ENCODE measurements at regions of chr1 and their contacts with region 1.

Region 1: GRCh38 chr1:153775458-153776327 is 486 bp downstream of the SLC27A3 start:
- DNase-seq: peak; percentile 73 to 79
- H3K4me3 ChIP-seq: peak overlapping the region; percentile 62 to 94 (median 87)
- H3K27ac ChIP-seq: peak overlapping the region; percentile 85 to 94
- H3K4me1 ChIP-seq: peaks cover 21 to 31% of the 10 kb centered on the region in 2 donors
- H3K27me3 ChIP-seq: no peaks in the 10 kb centered on the region
- CTCF ChIP-seq: no peak
- POLR2A ChIP-seq: no peak

Region 2: DNA sequence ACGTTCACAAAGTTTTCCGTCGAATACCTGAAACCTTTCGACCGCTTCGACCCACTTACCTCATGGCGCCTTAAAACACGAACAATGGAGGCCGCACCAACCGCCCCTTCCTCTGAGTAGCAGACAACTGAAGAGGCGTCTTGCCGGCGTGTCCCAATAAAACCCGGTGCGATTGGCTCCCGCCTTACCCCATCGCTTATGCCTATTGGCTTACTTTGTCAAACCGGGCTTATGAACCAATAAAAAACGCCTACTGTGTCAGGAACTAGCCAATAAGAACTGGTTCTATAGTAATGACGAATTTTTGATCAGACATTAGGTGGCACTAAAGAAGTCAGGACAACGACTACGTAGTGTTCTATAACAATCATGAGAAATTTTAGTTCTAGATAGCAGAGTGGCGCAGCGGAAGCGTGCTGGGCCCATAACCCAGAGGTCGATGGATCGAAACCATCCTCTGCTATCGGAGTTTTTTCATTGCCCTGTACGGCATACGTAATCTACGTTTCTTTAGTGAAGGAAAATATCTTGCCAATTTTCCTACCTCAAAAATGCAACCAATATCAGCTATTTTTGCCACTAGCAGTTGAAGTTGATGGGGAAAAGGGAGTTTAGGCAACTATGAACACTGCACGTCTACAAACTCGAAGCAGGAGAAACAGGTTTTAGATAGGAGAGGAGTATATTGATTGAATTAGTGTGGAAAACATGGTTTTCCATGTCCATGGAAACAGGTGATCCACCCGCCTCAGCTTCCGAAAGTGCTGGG is 104.7 kb before region 1 on chr1 and contains the start of gene ILF2:
- intact Hi-C with region 1: loop called (anchors 10 kb)
- DNase-seq: peak; percentile 99
- H3K4me3 ChIP-seq: peak within 1 kb of the TSS; percentile 82 to 84 (median 84)
- H3K27ac ChIP-seq: peak within 1 kb of the TSS; percentile 85 to 86
- H3K4me1 ChIP-seq: peaks cover 0 to 12% of the 10 kb centered on the region in 2 donors
- H3K27me3 ChIP-seq: no peaks in the 10 kb centered on the region
- CTCF ChIP-seq: peak in 1 of 3 donors; percentile 42
- POLR2A ChIP-seq: peak; percentile 93
- total RNA-seq, gene ILF2: 92.2 to 169 (median 147) TPM

Region 3: DNA sequence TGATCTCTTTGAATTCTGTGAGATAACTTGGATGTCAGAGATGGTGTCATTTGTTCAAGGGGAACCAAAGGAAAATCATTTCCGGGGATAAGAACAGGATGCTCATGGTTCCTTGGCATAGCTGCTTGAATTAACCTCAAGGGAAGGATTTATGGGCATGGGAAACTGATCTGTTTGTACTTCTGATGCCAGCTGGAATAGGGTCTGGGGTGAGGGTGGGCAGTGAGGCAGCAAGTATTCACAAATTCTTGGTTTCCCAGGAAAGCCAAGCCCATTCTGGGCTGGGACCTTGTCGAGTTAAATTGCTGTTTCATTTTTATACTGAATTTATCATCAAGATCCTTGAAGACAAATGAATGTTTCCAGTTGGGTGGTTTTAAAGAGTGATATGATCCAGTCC is 33.7 kb before region 1 on chr1:
- intact Hi-C with region 1: loop called (anchors 2 kb)
- DNase-seq: no peak
- H3K4me3 ChIP-seq: no peak overlapping the region
- H3K27ac ChIP-seq: peak overlapping the region in 1 of 2 donors; percentile 40
- H3K4me1 ChIP-seq: no peaks in the 10 kb centered on the region
- H3K27me3 ChIP-seq: no peaks in the 10 kb centered on the region
- CTCF ChIP-seq: no peak
- POLR2A ChIP-seq: no peak

Region 4: DNA sequence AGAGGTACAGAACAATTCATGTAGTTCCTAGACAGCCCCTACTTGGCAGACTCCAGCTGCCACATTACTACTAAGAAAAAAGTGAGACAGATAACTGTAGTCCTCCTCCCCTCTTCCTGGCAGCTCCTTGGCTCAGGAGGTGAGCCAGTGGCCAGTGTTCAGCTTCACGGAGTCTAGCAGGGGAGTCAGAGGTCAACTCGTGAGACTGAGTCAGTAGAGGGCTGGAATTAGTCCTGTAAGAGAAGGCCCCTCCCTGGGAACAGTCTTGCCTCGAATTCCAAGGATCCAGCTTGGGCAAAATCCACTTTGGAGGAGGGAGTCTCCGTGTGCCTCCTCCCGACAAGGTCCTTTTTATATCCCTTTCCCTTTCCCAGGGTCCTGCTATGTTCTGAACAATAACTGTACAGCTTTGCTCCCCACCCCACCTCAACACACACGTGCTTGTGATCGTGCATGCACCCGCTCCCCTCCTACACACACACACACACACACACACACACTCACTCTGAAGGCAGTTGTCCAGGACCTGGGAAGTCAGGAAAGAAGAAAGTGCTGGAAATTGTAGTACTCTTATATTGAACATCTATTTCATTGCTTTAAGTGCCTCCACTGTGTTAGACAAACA is 23.0 kb before region 1 on chr1:
- intact Hi-C with region 1: loop called (anchors 1 kb)
- DNase-seq: peak in 1 of 2 donors; percentile 39
- H3K4me3 ChIP-seq: no peak overlapping the region
- H3K27ac ChIP-seq: peak overlapping the region; percentile 69 to 82
- H3K4me1 ChIP-seq: no peaks in the 10 kb centered on the region
- H3K27me3 ChIP-seq: no peaks in the 10 kb centered on the region
- CTCF ChIP-seq: no peak
- POLR2A ChIP-seq: no peak

Region 5: DNA sequence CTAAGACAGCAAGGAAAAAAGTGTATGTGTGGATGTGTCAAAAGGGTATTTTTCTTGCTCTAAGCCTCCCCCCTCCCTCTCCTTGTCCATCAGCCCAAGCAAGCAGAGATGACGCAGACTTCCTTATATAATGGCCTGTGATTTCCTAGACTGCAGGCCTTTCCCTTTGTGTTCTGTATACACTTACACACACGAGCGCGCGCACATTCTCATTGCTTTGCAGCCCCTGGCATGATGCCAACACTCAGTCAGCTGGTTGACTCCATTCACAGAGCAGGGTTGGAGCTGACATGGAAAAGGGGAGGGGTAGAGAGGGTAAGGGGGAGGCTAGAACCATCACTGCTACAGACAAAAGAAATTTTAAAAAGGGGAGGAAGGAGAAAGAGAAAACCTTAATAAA is 105.3 kb after region 1 on chr1:
- intact Hi-C with region 1: no loop called
- DNase-seq: peak; percentile 52 to 86
- H3K4me3 ChIP-seq: peak overlapping the region in 1 of 3 donors; percentile 43
- H3K27ac ChIP-seq: peak overlapping the region in 1 of 2 donors; percentile 50
- H3K4me1 ChIP-seq: peaks cover 0 to 6% of the 10 kb centered on the region in 2 donors
- H3K27me3 ChIP-seq: no peaks in the 10 kb centered on the region
- CTCF ChIP-seq: no peak
- POLR2A ChIP-seq: no peak

Measured in breast epithelium (tissue), 4 donors.